Activated CD4-positive, alpha-beta T cell treated with anti-CD3 and anti-CD28 coated beads for 36 hours (primary cell): ENCODE measurements at regions of chr14 and their contacts with region 1.

Region 1: DNA sequence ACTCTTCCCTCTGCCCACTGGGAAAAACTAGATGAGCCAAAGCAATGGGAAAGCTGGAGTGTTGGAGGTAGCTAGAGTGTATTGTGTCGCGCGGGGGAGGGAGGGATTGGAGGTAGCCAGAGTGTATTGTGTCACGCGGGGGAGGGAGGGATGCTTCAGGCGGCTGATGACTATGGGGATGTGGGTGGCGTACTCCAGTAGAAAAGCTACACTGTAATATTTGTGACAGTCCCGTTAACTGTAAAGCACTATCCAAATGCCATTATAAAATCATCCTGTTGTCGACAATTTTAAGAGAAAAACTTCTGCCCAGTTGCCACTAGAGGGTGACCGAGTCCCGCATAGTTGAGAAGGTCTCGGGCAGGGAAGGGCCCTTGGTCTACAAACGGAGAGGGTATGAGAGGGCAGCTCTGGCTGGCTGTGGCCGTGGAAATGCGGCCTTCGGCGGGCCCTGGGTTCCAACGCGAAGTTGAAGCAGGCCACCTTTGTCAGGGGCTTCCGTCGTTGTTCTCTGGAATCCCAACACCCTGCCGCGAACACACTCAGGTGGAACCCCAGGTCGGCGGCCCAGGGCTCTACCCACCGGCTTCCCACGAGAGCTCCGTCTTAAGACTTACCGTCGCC is 15.1 kb upstream of the PLEK2 start:
- DNase-seq: peak; percentile 85
- ATAC-seq: peak; percentile 98
- H3K4me3 Mint-ChIP-seq: no peak overlapping the region
- H3K27ac Mint-ChIP-seq: no peak overlapping the region
- H3K4me1 Mint-ChIP-seq: no peaks in the 10 kb centered on the region
- H3K27me3 Mint-ChIP-seq: peaks cover 19% of the 10 kb centered on the region

Region 2: GRCh38 chr14:67411820-67412421 is 15.2 kb before region 1 on chr14 and contains the start of gene PLEK2:
- CTCF ChIA-PET with region 1: interaction called, 27 read pairs
- POLR2A ChIA-PET with region 1: interaction called, 3 read pairs
- intact Hi-C with region 1: no loop called
- DNase-seq: peak; percentile 71
- ATAC-seq: peak; percentile 68
- H3K4me3 Mint-ChIP-seq: peak within 1 kb of the TSS; percentile 59
- H3K27ac Mint-ChIP-seq: no peak within 1 kb of the TSS
- H3K4me1 Mint-ChIP-seq: peaks cover 17% of the 10 kb centered on the region
- H3K27me3 Mint-ChIP-seq: no peaks in the 10 kb centered on the region
- total RNA-seq, gene PLEK2: 2.9 to 5.1 TPM

Region 3: DNA sequence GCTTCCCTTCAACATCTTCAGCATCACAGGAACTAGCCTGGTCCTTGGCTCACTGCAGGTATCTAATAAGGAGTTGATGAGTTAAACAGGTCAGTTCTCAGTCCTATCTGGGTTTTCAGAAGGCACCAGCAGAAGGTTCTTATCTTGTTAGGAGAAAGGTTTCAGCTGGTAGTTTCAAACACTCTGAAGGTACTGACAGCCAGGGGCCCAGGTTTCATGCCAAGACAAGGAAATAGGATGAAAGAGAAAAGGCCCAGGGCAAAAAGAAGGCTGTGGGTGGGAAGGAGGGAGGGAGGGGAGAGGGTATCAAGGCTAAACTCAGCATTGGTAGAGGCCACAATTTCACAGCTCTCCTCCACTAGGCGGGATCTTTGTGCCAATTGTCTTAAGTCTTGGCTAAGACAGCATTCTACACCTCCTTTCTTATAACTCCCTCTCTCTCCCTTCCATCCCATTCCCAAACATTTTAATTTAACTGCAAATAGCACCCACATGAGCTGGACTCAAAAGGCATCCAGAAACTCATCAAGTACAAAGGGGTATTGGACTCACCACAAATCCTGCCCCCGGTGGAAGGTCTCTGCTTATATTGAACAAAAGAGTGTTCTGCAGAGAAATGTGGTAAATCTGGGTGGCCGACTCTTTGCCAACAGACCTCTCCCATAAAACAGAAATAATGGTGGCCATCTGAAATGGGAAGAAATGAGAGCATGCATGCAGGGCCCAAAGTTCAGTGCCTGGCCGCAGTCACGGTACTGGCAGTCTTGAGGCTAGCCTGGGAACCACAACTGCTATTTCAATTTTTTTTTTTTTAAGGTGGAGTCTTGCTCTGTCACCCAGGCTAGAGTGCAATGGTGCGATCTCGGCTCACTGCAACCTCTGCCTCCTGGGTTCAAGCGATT is 40.3 kb after region 1 on chr14:
- CTCF ChIA-PET with region 1: interaction called, 12 read pairs
- POLR2A ChIA-PET with region 1: no interaction called
- intact Hi-C with region 1: no loop called
- DNase-seq: peak; percentile 36
- ATAC-seq: no peak
- H3K4me3 Mint-ChIP-seq: no peak overlapping the region
- H3K27ac Mint-ChIP-seq: no peak overlapping the region
- H3K4me1 Mint-ChIP-seq: peaks cover 16% of the 10 kb centered on the region
- H3K27me3 Mint-ChIP-seq: no peaks in the 10 kb centered on the region

Region 4: GRCh38 chr14:67690011-67690410 is 262.9 kb after region 1 on chr14:
- CTCF ChIA-PET with region 1: no interaction called
- POLR2A ChIA-PET with region 1: no interaction called
- intact Hi-C with region 1: no loop called
- DNase-seq: no peak
- ATAC-seq: no peak
- H3K4me3 Mint-ChIP-seq: no peak overlapping the region
- H3K27ac Mint-ChIP-seq: no peak overlapping the region
- H3K4me1 Mint-ChIP-seq: peaks cover 20% of the 10 kb centered on the region
- H3K27me3 Mint-ChIP-seq: no peaks in the 10 kb centered on the region